Panc1 (cell line): ENCODE measurements at regions of chr20 and their contacts with region 1.

Region 1: DNA sequence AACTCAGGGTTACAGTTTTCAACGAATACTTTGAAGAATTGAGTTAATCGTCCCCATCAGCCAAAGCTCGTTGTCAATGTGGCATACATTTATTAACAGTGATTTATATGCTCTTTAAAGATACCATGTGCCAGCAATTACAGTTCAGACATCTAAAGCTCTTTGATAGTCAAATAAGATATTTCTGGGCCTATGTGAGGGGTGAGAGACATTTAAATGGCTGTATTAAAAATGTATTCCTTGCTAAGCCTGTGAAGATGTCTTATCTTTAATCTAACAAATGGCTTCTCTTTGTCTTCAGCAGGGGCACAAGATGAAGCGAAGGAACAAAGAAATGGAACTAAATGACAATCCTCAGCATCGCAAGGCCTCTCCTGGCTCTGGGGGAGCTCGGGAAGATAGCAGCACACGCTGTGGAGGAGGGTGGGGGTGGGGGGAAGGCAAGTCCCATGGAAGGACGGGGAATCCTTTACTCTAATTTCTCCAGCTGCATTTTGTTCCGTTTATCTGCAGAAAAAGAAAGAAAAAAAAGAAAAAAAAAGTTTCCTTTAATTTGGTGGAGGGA is 523.6 kb downstream of the KIF16B start:
- DNase-seq: no peak
- ATAC-seq: no peak
- H3K4me3 ChIP-seq: no peak overlapping the region
- H3K27ac ChIP-seq: no peak overlapping the region
- H3K4me1 ChIP-seq: no peaks in the 10 kb centered on the region
- H3K27me3 ChIP-seq: 0 out of 2 replicates have a peak, but pooled peaks cover 2% of the 10 kb centered on the region
- CTCF ChIP-seq: no peak

Region 2: GRCh38 chr20:14355791-14356190 is 1693.8 kb before region 1 on chr20:
- CTCF ChIA-PET with region 1: no interaction called
- POLR2A ChIA-PET with region 1: interaction called, 14 read pairs
- in situ Hi-C with region 1: no loop called
- intact Hi-C with region 1: no loop called
- DNase-seq: no peak
- ATAC-seq: no peak
- H3K4me3 ChIP-seq: no peak overlapping the region
- H3K27ac ChIP-seq: no peak overlapping the region
- H3K4me1 ChIP-seq: no peaks in the 10 kb centered on the region
- H3K27me3 ChIP-seq: no peaks in the 10 kb centered on the region
- CTCF ChIP-seq: no peak

Region 3: GRCh38 chr20:16028923-16029322 is 20.7 kb before region 1 on chr20:
- CTCF ChIA-PET with region 1: no interaction called
- POLR2A ChIA-PET with region 1: no interaction called
- in situ Hi-C with region 1: no loop called
- intact Hi-C with region 1: no loop called
- DNase-seq: no peak
- ATAC-seq: no peak
- H3K4me3 ChIP-seq: no peak overlapping the region
- H3K27ac ChIP-seq: no peak overlapping the region
- H3K4me1 ChIP-seq: no peaks in the 10 kb centered on the region
- H3K27me3 ChIP-seq: no peaks in the 10 kb centered on the region
- CTCF ChIP-seq: no peak

Region 4: DNA sequence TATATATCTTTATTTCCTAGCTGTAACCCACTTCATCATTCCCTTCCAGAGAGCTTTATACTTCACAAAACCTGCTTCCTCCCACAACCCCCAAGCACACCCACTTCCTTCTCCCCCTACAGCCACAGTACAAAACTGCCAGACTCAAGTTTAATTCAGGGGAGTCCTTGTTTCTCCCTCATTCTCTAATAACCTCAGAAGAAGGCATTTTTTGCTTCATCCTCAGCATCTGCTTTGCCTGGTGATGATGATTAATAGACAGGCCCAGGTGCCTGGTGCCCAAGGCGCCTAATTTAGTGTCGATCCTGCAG is 109.3 kb after region 1 on chr20:
- CTCF ChIA-PET with region 1: no interaction called
- POLR2A ChIA-PET with region 1: no interaction called
- in situ Hi-C with region 1: no loop called
- intact Hi-C with region 1: no loop called
- DNase-seq: no peak
- ATAC-seq: no peak
- H3K4me3 ChIP-seq: no peak overlapping the region
- H3K27ac ChIP-seq: no peak overlapping the region
- H3K4me1 ChIP-seq: no peaks in the 10 kb centered on the region
- H3K27me3 ChIP-seq: no peaks in the 10 kb centered on the region
- CTCF ChIP-seq: no peak